ENCODE measurements at regions of chr6 and their contacts with region 1.

Region 1: GRCh38 chr6:132813173-132813856 is 1.1 kb upstream of the RPS12 start:
- DNase-seq: peak; percentile 65
- H3K4me3 ChIP-seq: peak overlapping the region; percentile 93
- H3K27ac ChIP-seq: peak overlapping the region; percentile 88
- H3K4me1 ChIP-seq: peaks cover 39% of the 10 kb centered on the region
- CTCF ChIP-seq: no peak

Region 2: GRCh38 chr6:132270726-132271402 is 542.5 kb before region 1 on chr6:
- CTCF ChIA-PET with region 1: no interaction called
- POLR2A ChIA-PET with region 1: interaction called, 8 read pairs
- intact Hi-C with region 1: loop called (anchors 5 kb)
- DNase-seq: peak; percentile 61
- H3K4me3 ChIP-seq: peak overlapping the region; percentile 13
- H3K27ac ChIP-seq: peak overlapping the region; percentile 100
- H3K4me1 ChIP-seq: peaks cover 81% of the 10 kb centered on the region
- CTCF ChIP-seq: no peak

Region 3: GRCh38 chr6:132512638-132513632 is 300.4 kb before region 1 on chr6 and contains the start of gene STX7:
- CTCF ChIA-PET with region 1: no interaction called
- POLR2A ChIA-PET with region 1: interaction called, 4 read pairs
- intact Hi-C with region 1: loop called (anchors 2 kb)
- DNase-seq: peak; percentile 94
- H3K4me3 ChIP-seq: peak within 1 kb of the TSS; percentile 82
- H3K27ac ChIP-seq: peak within 1 kb of the TSS; percentile 79
- H3K4me1 ChIP-seq: peaks cover 41% of the 10 kb centered on the region
- CTCF ChIP-seq: no peak
- total RNA-seq, gene STX7: 66.5 and 88.8 TPM in 2 replicates

Region 4: GRCh38 chr6:132703936-132704335 is 109.4 kb before region 1 on chr6:
- CTCF ChIA-PET with region 1: no interaction called
- POLR2A ChIA-PET with region 1: no interaction called
- intact Hi-C with region 1: no loop called
- DNase-seq: no peak
- H3K4me3 ChIP-seq: no peak overlapping the region
- H3K27ac ChIP-seq: no peak overlapping the region
- H3K4me1 ChIP-seq: peaks cover 11% of the 10 kb centered on the region
- CTCF ChIP-seq: no peak

Region 5: DNA sequence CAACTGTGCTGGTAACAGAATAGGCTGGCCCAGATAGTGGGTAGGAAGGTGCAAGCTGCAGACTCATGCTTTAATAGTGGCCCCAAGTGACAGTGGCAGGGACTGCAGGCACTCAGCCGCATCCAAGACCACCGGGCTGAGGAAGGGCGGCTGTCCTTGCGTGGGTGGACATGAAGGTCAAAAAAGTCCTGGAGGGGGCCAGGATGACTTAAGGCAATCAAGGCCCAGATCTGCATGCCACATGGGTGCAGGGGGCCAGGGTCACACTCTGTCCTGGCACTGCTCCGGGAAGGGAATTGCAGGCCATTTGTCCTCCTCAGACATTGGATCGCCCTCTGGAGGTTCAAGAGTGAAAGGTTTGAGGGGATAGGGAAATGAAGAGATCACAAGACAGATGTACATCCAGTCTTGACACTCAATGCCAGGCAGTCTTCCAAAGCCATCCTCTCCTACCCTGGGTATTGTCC is 45.2 kb before region 1 on chr6:
- CTCF ChIA-PET with region 1: no interaction called
- POLR2A ChIA-PET with region 1: interaction called, 25 read pairs
- intact Hi-C with region 1: loop called (anchors 2 kb)
- DNase-seq: peak; percentile 59
- H3K4me3 ChIP-seq: peak overlapping the region; percentile 26
- H3K27ac ChIP-seq: no peak overlapping the region
- H3K4me1 ChIP-seq: peaks cover 8% of the 10 kb centered on the region
- CTCF ChIP-seq: peak; percentile 88

Region 6: GRCh38 chr6:132798869-132799538 is 14.3 kb before region 1 on chr6:
- CTCF ChIA-PET with region 1: interaction called, 3 read pairs
- POLR2A ChIA-PET with region 1: interaction called, 36 read pairs
- intact Hi-C with region 1: loop called (anchors 1 kb)
- DNase-seq: peak; percentile 88
- H3K4me3 ChIP-seq: no peak overlapping the region
- H3K27ac ChIP-seq: no peak overlapping the region
- H3K4me1 ChIP-seq: peaks cover 7% of the 10 kb centered on the region
- CTCF ChIP-seq: peak; percentile 94

Region 7: GRCh38 chr6:133906050-133906449 is 1092.7 kb after region 1 on chr6:
- CTCF ChIA-PET with region 1: no interaction called
- POLR2A ChIA-PET with region 1: no interaction called
- intact Hi-C with region 1: no loop called
- DNase-seq: no peak
- H3K4me3 ChIP-seq: no peak overlapping the region
- H3K27ac ChIP-seq: no peak overlapping the region
- H3K4me1 ChIP-seq: no peaks in the 10 kb centered on the region
- CTCF ChIP-seq: no peak

Region 8: DNA sequence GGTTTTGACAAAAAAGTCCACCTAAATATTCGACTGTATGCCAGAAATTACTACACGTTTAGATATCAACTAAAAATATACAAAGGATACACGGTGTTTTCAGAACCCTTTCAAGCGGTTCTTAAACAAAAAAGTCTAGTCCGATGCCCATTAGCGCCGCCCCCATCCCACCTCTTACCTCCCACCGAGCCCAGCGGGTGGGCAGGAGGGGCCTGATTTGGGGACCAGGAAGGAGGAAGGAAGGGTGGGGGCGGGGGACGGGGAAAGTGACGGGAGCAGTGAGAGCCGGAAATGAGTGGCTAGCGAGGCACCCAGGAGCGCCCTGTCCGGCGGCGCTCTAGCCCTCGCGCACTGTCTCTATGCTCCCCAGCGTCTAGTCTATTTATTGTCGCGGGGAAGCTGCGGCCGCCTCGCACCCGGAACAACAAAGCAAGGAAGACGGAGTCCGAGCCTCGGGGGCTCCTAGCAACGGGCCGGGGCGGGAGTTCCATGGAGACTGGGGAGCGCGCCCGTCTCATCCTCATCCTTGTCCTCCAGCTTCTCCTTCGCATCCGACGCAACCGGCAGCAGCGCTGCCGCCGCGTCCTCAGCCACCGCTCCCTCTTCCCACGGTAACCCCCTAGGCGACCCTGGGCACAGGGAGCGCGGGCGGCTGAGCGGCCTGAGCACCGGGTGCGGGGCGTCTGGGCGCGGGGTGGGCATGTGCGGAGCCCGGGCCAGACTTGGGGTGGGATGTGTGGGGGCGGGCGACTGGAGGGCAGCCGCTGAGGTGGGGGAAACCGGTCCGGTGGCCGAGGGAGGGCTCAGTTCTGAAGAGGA is 1139.7 kb after region 1 on chr6 and contains the start of gene TBPL1:
- CTCF ChIA-PET with region 1: interaction called, 3 read pairs
- POLR2A ChIA-PET with region 1: no interaction called
- intact Hi-C with region 1: loop called (anchors 10 kb)
- DNase-seq: peak; percentile 96
- H3K4me3 ChIP-seq: peak within 1 kb of the TSS; percentile 99
- H3K27ac ChIP-seq: peak within 1 kb of the TSS; percentile 77
- H3K4me1 ChIP-seq: peaks cover 45% of the 10 kb centered on the region
- CTCF ChIP-seq: no peak
- total RNA-seq, gene TBPL1: 25.9 and 27.8 TPM in 2 replicates

Measured in OCI-LY7 (cell line).